Endothelial cell of umbilical vein (primary cell): ENCODE measurements at regions of chr12 and their contacts with region 1.

Region 1: DNA sequence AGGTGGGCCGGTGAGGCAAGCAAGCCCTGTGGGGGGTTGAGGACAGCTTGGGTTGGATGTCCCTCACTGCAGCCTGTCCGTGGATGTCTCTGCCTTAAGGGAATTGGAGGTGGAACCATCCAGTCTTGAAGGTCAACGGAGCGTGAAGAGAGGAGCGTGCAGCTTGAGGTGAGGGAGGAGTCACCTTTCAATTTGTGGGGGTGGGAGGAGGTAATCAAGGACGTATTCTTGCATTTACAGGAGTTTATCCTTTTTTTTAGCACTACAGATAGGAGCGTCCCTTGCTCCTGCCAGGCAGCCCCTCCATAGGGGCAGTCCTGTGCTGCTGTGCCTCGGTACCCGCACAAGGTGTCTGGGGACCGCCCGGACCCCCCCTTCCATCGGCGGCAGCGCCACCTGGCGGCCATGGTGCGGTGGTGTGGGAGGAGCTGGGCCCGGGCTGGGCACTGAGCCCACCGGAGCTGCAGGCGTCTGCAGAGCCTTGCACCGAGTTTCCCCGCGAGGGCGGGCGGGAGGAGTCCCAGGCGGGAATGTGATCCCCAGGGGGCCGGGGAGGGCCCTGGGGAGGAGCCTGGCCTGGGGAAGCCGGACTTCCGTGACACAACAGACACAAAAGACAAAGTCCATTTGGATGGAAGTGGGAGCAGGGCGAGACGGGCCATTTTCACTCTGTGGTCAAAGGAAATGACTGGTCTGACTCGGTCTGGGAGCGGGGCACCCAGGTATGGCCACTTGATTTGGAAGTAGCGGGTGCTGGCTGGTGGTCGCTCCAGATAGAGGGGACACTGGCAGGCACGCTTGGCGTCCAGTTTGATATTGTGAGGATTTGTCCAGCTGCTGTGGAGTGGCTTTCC is 923 bp downstream of the DNAJC22 start:
- DNase-seq: peak; percentile 69
- H3K4me3 ChIP-seq: peak overlapping the region in 1 of 3 experiments; percentile 1
- H3K27ac ChIP-seq: no peak overlapping the region
- H3K4me1 ChIP-seq: peaks cover 37% of the 10 kb centered on the region
- H3K27me3 ChIP-seq: peaks cover 27 to 38% of the 10 kb centered on the region in 2 experiments
- CTCF ChIP-seq: peak; percentile 95 to 98
- POLR2A ChIP-seq: no peak

Region 2: DNA sequence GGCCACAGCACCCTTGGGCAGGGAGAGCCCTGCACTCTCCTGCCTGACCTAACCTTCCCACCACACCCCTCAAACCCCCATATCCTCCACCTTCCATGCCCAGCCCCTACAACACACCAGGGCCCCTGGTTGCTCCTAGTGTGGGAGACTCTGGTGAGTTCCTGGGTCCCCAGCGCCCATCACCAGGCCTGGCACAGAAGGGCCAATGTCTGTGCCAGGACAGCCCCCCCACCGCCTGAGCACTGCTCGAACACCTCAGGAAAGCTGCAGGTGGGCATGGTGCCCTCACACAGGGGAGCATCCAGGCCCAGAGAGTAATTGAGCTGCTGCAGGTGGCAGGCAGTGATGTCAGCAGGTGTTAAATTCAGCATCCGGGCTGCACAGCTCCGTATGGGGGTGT is 573.9 kb before region 1 on chr12:
- CTCF ChIA-PET with region 1: no interaction called
- POLR2A ChIA-PET with region 1: no interaction called
- dilution Hi-C with region 1: no loop called
- intact Hi-C with region 1: no loop called
- DNase-seq: no peak
- H3K4me3 ChIP-seq: no peak overlapping the region
- H3K27ac ChIP-seq: no peak overlapping the region
- H3K4me1 ChIP-seq: no peaks in the 10 kb centered on the region
- H3K27me3 ChIP-seq: no peaks in the 10 kb centered on the region
- CTCF ChIP-seq: no peak
- POLR2A ChIP-seq: no peak

Region 3: DNA sequence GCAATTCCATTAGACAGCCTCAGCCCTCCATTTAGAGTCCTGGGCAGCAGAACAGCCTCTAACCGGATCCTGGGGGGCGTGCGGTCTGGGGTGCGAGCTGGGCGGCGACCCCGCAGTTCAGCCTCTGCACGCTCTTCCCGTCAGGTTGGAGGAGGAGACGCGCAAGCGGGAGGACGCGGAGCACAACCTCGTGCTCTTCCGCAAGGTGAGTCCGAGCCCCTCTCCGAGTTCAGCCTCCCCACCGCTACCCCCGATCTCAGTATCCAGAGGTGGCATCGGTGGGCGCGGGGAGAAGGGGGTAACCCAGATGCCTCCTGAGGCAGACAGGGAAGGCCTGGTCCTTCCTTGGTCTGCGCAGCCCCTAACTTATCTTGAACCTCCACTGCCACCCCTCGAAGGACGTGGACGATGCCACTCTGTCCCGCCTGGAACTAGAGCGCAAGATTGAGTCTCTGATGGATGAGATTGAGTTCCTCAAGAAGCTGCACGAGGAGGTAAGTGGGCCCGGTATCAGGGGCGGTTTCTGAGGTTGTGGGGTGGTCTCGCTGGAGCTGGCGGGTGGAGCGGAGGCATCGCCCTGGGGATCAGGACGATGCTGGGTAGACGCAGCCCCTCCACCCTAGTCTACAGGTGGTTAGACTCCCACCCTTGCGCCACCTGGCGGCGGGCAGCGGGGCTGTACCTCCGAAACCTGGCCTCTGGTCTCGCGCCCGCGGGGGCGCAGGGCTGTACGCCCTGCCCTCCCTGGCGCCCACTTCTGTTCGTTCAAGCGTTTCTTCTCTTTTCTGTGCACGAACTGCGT is 51.4 kb before region 1 on chr12:
- CTCF ChIA-PET with region 1: interaction called, 162 read pairs
- POLR2A ChIA-PET with region 1: interaction called, 3 read pairs
- dilution Hi-C with region 1: no loop called
- intact Hi-C with region 1: no loop called
- DNase-seq: no peak
- H3K4me3 ChIP-seq: no peak overlapping the region
- H3K27ac ChIP-seq: no peak overlapping the region
- H3K4me1 ChIP-seq: peaks cover 3% of the 10 kb centered on the region
- H3K27me3 ChIP-seq: peaks cover 32 to 42% of the 10 kb centered on the region in 2 experiments
- CTCF ChIP-seq: peak; percentile 73 to 82
- POLR2A ChIP-seq: no peak

Region 4: GRCh38 chr12:49331380-49332222 is 16.0 kb before region 1 on chr12:
- CTCF ChIA-PET with region 1: interaction called, 280 read pairs
- POLR2A ChIA-PET with region 1: interaction called, 3 read pairs
- dilution Hi-C with region 1: no loop called
- intact Hi-C with region 1: loop called (anchors 1 kb)
- DNase-seq: peak; percentile 75
- H3K4me3 ChIP-seq: no peak overlapping the region
- H3K27ac ChIP-seq: no peak overlapping the region
- H3K4me1 ChIP-seq: no peaks in the 10 kb centered on the region
- H3K27me3 ChIP-seq: peaks cover 33% of the 10 kb centered on the region in 2 experiments
- CTCF ChIP-seq: peak; percentile 81 to 86
- POLR2A ChIP-seq: no peak

Region 5: GRCh38 chr12:49366652-49367380 is 19.2 kb after region 1 on chr12:
- CTCF ChIA-PET with region 1: interaction called, 157 read pairs
- POLR2A ChIA-PET with region 1: interaction called, 5 read pairs
- dilution Hi-C with region 1: no loop called
- intact Hi-C with region 1: no loop called
- DNase-seq: peak; percentile 97
- H3K4me3 ChIP-seq: peak overlapping the region; percentile 76 to 94 (median 85)
- H3K27ac ChIP-seq: peak overlapping the region; percentile 77
- H3K4me1 ChIP-seq: peaks cover 35% of the 10 kb centered on the region
- H3K27me3 ChIP-seq: no peaks in the 10 kb centered on the region
- CTCF ChIP-seq: peak in 1 of 2 donors; percentile 44
- POLR2A ChIP-seq: peak; percentile 46

Region 6: DNA sequence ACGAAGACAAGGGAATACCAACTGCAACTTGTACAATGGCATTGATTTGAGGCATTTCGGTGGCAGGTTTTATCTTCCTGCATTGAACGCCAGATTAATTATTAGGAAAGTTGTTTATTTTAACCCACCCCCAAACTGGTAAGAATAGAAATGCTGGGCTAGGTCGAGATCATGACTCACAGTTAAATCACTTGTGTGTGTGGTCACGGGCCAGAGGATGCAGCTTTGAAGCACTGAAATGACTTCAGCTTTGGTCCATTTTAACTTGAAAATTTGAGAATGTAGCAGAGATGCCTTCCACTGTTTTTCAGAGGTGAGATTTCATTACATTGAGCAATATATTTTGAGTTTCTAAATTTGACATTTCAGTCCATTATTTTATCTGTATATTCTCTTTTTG is 167.7 kb after region 1 on chr12:
- CTCF ChIA-PET with region 1: interaction called, 59 read pairs
- POLR2A ChIA-PET with region 1: no interaction called
- dilution Hi-C with region 1: loop called (anchors 25 kb)
- intact Hi-C with region 1: no loop called
- DNase-seq: peak; percentile 83
- H3K4me3 ChIP-seq: no peak overlapping the region
- H3K27ac ChIP-seq: peak overlapping the region; percentile 62
- H3K4me1 ChIP-seq: peaks cover 38% of the 10 kb centered on the region
- H3K27me3 ChIP-seq: no peaks in the 10 kb centered on the region
- CTCF ChIP-seq: no peak
- POLR2A ChIP-seq: no peak

Region 7: DNA sequence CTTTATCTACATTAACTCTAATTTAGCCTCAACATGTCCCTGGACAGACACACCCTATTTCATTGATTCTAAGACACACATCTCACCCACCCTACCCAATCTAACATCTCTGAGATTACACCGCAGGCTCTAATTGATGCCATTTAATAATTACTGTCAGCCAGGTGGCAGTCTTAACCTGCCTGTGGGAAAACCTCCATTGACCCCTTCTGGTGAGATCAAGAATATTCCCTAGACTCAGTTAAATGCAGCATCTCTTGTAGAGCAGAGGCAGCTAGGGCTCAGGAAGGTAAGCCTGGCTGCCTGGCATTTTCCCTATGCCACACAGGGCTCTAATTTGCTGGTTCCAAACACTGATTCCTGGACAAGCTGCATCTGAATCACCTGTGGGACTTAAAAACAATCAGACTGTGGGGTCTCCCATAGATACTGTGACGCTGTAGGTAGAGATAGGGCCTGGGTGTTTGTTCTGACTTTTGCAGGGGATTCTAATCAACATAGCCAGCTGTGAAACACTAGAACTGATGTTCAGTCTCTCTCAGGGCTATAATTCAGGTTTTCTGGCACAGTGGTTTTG is 206.0 kb after region 1 on chr12:
- CTCF ChIA-PET with region 1: interaction called, 13 read pairs
- POLR2A ChIA-PET with region 1: no interaction called
- dilution Hi-C with region 1: no loop called
- intact Hi-C with region 1: no loop called
- DNase-seq: peak; percentile 44
- H3K4me3 ChIP-seq: no peak overlapping the region
- H3K27ac ChIP-seq: no peak overlapping the region
- H3K4me1 ChIP-seq: peaks cover 6% of the 10 kb centered on the region
- H3K27me3 ChIP-seq: peaks cover 0 to 2% of the 10 kb centered on the region in 2 experiments
- CTCF ChIP-seq: peak; percentile 30 to 34
- POLR2A ChIP-seq: no peak